CD4-positive, alpha-beta memory T cell (primary cell): ENCODE measurements at regions of chr1 and their contacts with region 1.

Region 1: DNA sequence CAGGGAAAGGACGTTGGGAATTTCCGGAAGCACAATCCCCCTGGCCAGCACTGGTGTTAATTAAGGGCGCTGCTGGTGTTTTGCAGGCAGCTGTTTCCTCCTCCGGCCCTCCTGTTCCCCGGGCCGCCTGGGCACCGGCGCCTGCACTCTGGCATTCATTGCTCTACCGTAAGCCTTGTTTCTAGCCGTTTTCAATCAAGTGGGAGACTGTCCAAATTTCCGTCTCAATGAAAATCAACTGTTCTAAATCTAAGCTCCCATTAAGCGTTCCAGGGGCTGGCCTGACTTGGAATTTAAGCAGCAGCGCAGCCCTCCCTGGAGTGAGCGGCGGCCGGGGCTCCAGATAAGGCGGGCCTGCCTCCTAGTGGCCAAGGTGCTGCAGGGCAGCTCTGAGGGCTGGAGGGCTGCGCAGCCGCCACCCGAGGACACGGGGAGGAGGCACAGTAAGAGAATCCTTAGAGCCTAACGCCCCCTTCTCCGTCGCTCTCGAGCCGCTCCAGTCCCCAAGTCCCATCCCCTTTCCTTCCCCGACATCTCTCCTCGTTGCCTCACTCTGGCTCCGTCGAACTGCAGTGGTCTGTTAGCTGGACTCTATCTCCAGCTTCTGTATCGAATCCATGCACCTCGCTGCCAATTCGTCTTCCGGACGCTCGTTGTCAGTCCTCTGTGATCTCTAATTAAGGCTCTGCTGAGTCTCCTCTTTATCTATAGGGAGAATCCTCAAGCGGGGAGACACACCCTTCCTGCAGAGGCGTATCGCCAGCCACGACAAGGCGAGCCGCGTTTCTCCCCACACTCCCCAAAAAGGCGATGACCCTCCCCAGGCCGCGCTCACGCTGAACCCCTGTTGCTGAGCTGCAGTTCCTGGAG is 57.8 kb upstream of the LRRC8D start:
- DNase-seq: peak; percentile 82 to 85 (median 84)
- H3K4me3 ChIP-seq: peak overlapping the region; percentile 11 to 74
- H3K4me3 Mint-ChIP-seq: peak overlapping the region; percentile 88 to 97 (median 92)
- H3K27ac ChIP-seq: peak overlapping the region; percentile 62
- H3K27ac Mint-ChIP-seq: peak overlapping the region; percentile 80 to 97 (median 94)
- H3K4me1 ChIP-seq: peaks cover 53% of the 10 kb centered on the region
- H3K4me1 Mint-ChIP-seq: peaks cover 32 to 55% (median 46%) of the 10 kb centered on the region in 4 donors
- H3K27me3 ChIP-seq: no peaks in the 10 kb centered on the region
- H3K27me3 Mint-ChIP-seq: no peaks in the 10 kb centered on the region

Region 2: GRCh38 chr1:89483010-89483756 is 279.8 kb before region 1 on chr1:
- CTCF ChIA-PET with region 1: interaction called, 115 read pairs
- POLR2A ChIA-PET with region 1: interaction called, 6 read pairs
- intact Hi-C with region 1: loop called (anchors 1 kb)
- DNase-seq: peak; percentile 63 to 79 (median 68)
- H3K4me3 ChIP-seq: no peak overlapping the region
- H3K4me3 Mint-ChIP-seq: no peak overlapping the region
- H3K27ac ChIP-seq: no peak overlapping the region
- H3K27ac Mint-ChIP-seq: no peak overlapping the region
- H3K4me1 ChIP-seq: no peaks in the 10 kb centered on the region
- H3K4me1 Mint-ChIP-seq: peaks cover 0 to 10% (median 10%) of the 10 kb centered on the region in 4 donors
- H3K27me3 ChIP-seq: no peaks in the 10 kb centered on the region
- H3K27me3 Mint-ChIP-seq: no peaks in the 10 kb centered on the region

Region 3: GRCh38 chr1:89598450-89599331 is 164.3 kb before region 1 on chr1:
- CTCF ChIA-PET with region 1: interaction called, 267 read pairs
- POLR2A ChIA-PET with region 1: interaction called, 32 read pairs
- intact Hi-C with region 1: loop called (anchors 1 kb)
- DNase-seq: peak in 4 of 5 donors; percentile 32 to 49 (median 38)
- H3K4me3 ChIP-seq: no peak overlapping the region
- H3K4me3 Mint-ChIP-seq: peak overlapping the region in 5 of 8 donors; percentile 37 to 79 (median 45)
- H3K27ac ChIP-seq: no peak overlapping the region
- H3K27ac Mint-ChIP-seq: peak overlapping the region; percentile 19 to 81 (median 71)
- H3K4me1 ChIP-seq: peaks cover 64% of the 10 kb centered on the region
- H3K4me1 Mint-ChIP-seq: peaks cover 55 to 82% (median 74%) of the 10 kb centered on the region in 4 donors
- H3K27me3 ChIP-seq: no peaks in the 10 kb centered on the region
- H3K27me3 Mint-ChIP-seq: no peaks in the 10 kb centered on the region

Region 4: GRCh38 chr1:89622895-89623294 is 140.1 kb before region 1 on chr1:
- CTCF ChIA-PET with region 1: interaction called, 629 read pairs
- POLR2A ChIA-PET with region 1: interaction called, 18 read pairs
- intact Hi-C with region 1: no loop called
- DNase-seq: peak; percentile 35 to 56 (median 43)
- H3K4me3 ChIP-seq: no peak overlapping the region
- H3K4me3 Mint-ChIP-seq: peak overlapping the region in 2 of 8 donors; percentile 36 to 49
- H3K27ac ChIP-seq: no peak overlapping the region
- H3K27ac Mint-ChIP-seq: peak overlapping the region in 5 of 7 donors; percentile 60 to 95 (median 70)
- H3K4me1 ChIP-seq: peaks cover 54% of the 10 kb centered on the region
- H3K4me1 Mint-ChIP-seq: peaks cover 41 to 75% (median 54%) of the 10 kb centered on the region in 4 donors
- H3K27me3 ChIP-seq: no peaks in the 10 kb centered on the region
- H3K27me3 Mint-ChIP-seq: no peaks in the 10 kb centered on the region

Region 5: DNA sequence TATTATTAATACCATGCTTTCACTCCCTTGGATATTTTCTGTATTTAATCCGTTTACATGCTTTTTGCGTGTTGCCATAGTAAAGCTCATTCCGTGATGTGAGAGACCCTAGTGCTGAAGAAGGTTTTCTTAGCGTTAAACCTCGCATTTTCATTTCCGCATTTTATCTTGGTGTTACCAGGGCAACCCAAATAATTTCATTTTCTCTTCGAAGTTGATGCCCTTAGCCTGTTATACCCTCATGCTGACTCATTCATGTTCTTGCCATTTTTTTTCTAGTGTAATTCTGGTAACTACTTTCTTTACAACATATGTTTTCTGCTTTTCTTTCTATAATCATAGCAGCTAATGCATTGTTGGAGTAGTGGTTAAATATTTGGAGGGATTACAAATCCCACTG is 92.9 kb before region 1 on chr1:
- CTCF ChIA-PET with region 1: interaction called, 19 read pairs
- POLR2A ChIA-PET with region 1: interaction called, 11 read pairs
- intact Hi-C with region 1: no loop called
- DNase-seq: peak; percentile 65 to 79 (median 70)
- H3K4me3 ChIP-seq: no peak overlapping the region
- H3K4me3 Mint-ChIP-seq: peak overlapping the region; percentile 4 to 82 (median 72)
- H3K27ac ChIP-seq: no peak overlapping the region
- H3K27ac Mint-ChIP-seq: peak overlapping the region; percentile 19 to 93 (median 84)
- H3K4me1 ChIP-seq: peaks cover 96% of the 10 kb centered on the region
- H3K4me1 Mint-ChIP-seq: peaks cover 79 to 97% (median 87%) of the 10 kb centered on the region in 4 donors
- H3K27me3 ChIP-seq: no peaks in the 10 kb centered on the region
- H3K27me3 Mint-ChIP-seq: no peaks in the 10 kb centered on the region

Region 6: GRCh38 chr1:89719502-89720306 is 43.3 kb before region 1 on chr1:
- CTCF ChIA-PET with region 1: interaction called, 54 read pairs
- POLR2A ChIA-PET with region 1: interaction called, 36 read pairs
- intact Hi-C with region 1: loop called (anchors 1 kb)
- DNase-seq: peak in 4 of 5 donors; percentile 30 to 45 (median 37)
- H3K4me3 ChIP-seq: no peak overlapping the region
- H3K4me3 Mint-ChIP-seq: peak overlapping the region in 7 of 8 donors; percentile 25 to 83 (median 70)
- H3K27ac ChIP-seq: peak overlapping the region; percentile 50
- H3K27ac Mint-ChIP-seq: peak overlapping the region; percentile 84 to 96 (median 91)
- H3K4me1 ChIP-seq: peaks cover 83% of the 10 kb centered on the region
- H3K4me1 Mint-ChIP-seq: peaks cover 52 to 81% (median 72%) of the 10 kb centered on the region in 4 donors
- H3K27me3 ChIP-seq: no peaks in the 10 kb centered on the region
- H3K27me3 Mint-ChIP-seq: no peaks in the 10 kb centered on the region

Region 7: DNA sequence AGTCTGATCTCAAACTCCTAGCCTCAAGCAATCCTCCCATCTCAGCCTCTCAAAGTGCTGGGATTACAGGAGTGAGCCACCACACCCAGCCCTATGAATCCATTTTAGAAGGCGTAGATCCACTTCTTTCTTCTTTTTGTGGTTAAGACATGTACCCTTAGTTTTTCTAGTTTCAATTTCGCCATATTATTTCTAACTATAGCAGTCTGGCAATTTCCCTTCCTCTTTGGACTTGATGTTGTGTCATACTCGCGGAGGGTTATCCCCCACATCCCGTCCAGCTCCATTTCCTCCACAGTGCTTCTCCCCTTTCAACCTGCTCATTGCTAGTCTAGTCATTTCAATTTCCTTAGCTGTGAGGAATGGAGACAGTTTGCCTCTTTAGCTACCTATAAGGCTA is 52.6 kb after region 1 on chr1:
- CTCF ChIA-PET with region 1: no interaction called
- POLR2A ChIA-PET with region 1: no interaction called
- intact Hi-C with region 1: no loop called
- DNase-seq: no peak
- H3K4me3 ChIP-seq: no peak overlapping the region
- H3K4me3 Mint-ChIP-seq: peak overlapping the region in 1 of 8 donors; percentile 27
- H3K27ac ChIP-seq: no peak overlapping the region
- H3K27ac Mint-ChIP-seq: no peak overlapping the region
- H3K4me1 ChIP-seq: peaks cover 11% of the 10 kb centered on the region
- H3K4me1 Mint-ChIP-seq: peaks cover 12 to 14% (median 13%) of the 10 kb centered on the region in 4 donors
- H3K27me3 ChIP-seq: no peaks in the 10 kb centered on the region
- H3K27me3 Mint-ChIP-seq: peaks cover 4 to 9% of the 10 kb centered on the region in 2 donors

Region 8: DNA sequence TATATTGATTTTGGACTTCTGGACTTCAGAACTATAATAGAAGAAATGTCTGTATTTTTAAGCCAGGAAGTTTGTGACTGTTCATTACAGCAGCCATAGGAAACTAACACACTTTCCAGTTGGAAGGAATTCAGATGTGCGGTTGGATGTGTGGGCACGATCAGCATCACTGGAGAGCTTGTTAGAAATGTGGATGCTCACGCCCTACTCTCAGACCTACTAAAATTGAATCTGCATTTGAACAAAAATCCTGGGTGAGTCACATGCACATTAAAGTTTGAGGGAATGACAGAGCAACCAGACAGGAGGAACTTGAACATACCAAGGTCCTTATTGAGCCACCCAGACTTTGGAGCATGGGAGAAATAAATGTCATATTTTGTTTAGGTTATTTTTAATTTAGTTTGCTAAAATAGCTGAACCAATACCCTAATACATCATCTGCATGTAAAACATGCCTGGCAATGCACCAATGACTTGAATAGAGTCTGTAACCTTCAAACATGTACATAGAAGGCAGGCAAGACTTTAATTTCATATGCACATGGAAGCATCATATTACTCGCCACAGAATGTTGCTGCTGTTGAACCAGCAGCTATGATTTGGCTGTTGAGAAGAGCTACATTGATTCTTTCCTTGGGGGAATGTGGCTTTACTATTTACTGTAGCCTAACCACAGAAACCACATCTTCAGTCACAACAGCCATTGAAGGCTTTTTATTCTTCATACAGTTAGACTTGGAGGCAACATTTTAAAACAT is 607.9 kb after region 1 on chr1:
- CTCF ChIA-PET with region 1: no interaction called
- POLR2A ChIA-PET with region 1: no interaction called
- intact Hi-C with region 1: no loop called
- DNase-seq: no peak
- H3K4me3 ChIP-seq: no peak overlapping the region
- H3K4me3 Mint-ChIP-seq: no peak overlapping the region
- H3K27ac ChIP-seq: no peak overlapping the region
- H3K27ac Mint-ChIP-seq: no peak overlapping the region
- H3K4me1 ChIP-seq: no peaks in the 10 kb centered on the region
- H3K4me1 Mint-ChIP-seq: peaks cover 0 to 3% (median 0%) of the 10 kb centered on the region in 4 donors
- H3K27me3 ChIP-seq: no peaks in the 10 kb centered on the region
- H3K27me3 Mint-ChIP-seq: no peaks in the 10 kb centered on the region